ENCODE measurements at regions of chr5 and their contacts with region 1.

Region 1: GRCh38 chr5:154072414-154073171 is 33.8 kb downstream of the MFAP3 start:
- DNase-seq: peak; percentile 72 to 84 (median 76)
- H3K4me3 ChIP-seq: peak overlapping the region in 1 of 7 experiments; percentile 37
- H3K27ac ChIP-seq: no peak overlapping the region
- H3K4me1 ChIP-seq: peaks cover 0 to 7% (median 2%) of the 10 kb centered on the region in 4 experiments
- H3K27me3 ChIP-seq: no peaks in the 10 kb centered on the region

Region 2: DNA sequence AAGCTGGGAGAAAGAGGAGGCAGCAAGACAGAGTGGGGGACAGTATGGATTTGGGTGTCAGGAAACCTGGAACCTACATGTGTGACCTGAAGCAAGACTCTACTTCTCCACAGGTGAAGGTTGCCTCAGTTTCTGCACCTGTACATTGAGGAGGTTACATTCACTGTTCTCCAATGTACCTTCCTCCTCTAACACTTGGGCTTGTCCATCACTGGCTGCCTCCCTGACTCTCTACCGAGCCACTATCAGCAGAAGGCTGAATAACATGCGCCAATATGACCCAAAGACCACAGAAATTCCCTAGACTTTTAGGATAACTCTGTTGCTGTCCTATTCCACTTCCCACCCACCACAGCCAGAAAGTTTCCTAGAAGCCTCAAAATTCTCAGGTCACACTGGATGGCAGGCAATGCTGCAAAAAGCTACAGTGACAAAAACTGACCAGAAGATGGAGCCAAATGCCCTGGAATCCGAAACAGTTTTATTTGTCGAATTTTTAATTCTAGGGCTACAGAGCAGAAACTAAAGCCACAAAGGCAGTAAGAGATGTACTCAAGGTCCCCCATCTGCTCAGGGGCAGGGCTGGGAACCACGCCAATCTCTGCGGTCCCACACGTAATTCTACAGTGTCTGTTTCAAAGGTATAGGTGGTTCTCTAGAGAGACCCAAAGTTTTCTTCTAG is 98.3 kb before region 1 on chr5:
- CTCF ChIA-PET with region 1: interaction called, 12 read pairs
- POLR2A ChIA-PET with region 1: no interaction called
- DNase-seq: peak; percentile 42 to 77 (median 73)
- H3K4me3 ChIP-seq: no peak overlapping the region
- H3K27ac ChIP-seq: no peak overlapping the region
- H3K4me1 ChIP-seq: peaks cover 0 to 4% (median 0%) of the 10 kb centered on the region in 4 experiments
- H3K27me3 ChIP-seq: peaks cover 0 to 3% (median 0%) of the 10 kb centered on the region in 5 experiments

Region 3: DNA sequence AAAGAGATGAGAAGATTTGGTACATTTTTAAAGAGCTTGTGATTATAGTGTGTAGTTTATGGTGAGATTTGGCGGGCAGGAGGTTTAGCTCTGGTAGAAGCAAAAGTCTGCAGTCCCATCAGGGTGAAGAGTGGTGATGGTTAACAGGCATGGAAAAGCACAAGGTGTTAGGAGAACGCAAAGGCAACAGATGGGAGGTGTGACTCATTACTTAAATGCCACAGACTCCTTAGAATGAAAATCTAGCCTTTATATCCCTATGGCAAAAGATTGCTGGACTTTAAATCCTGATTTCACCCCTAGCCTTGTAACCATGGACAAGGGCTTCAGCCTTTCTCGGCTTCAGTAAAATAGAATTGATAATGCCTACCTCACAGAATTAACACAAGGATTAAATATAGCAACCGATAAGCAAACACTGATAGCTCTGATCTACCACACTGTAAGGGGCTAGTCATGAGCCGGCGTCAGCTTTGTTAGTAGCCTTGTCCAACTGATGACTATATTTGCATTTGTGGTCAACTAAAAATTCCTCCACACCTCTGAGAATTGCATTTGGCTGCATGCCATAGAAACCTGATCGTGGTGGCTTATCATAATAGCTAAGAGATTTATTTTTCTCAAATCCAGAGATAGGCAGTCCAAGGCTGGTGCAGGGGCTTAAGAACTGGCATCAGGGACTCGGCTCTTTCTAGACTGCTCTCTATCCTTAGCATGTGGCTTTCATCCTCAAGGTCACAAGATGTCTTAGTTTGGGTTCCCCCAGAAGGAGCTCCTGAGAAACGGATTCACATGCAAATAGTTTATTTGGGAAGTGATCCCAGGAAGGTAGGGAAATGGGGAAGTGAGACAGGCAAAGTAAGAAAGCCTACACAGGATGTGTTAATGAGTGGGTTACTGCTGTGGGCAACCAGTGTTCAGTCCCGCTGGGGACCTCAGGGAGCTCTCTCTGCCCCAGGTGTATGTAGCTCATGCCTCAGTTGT is 14.2 kb before region 1 on chr5:
- CTCF ChIA-PET with region 1: interaction called, 14 read pairs
- POLR2A ChIA-PET with region 1: no interaction called
- DNase-seq: no peak
- H3K4me3 ChIP-seq: no peak overlapping the region
- H3K27ac ChIP-seq: no peak overlapping the region
- H3K4me1 ChIP-seq: no peaks in the 10 kb centered on the region
- H3K27me3 ChIP-seq: no peaks in the 10 kb centered on the region

Region 4: DNA sequence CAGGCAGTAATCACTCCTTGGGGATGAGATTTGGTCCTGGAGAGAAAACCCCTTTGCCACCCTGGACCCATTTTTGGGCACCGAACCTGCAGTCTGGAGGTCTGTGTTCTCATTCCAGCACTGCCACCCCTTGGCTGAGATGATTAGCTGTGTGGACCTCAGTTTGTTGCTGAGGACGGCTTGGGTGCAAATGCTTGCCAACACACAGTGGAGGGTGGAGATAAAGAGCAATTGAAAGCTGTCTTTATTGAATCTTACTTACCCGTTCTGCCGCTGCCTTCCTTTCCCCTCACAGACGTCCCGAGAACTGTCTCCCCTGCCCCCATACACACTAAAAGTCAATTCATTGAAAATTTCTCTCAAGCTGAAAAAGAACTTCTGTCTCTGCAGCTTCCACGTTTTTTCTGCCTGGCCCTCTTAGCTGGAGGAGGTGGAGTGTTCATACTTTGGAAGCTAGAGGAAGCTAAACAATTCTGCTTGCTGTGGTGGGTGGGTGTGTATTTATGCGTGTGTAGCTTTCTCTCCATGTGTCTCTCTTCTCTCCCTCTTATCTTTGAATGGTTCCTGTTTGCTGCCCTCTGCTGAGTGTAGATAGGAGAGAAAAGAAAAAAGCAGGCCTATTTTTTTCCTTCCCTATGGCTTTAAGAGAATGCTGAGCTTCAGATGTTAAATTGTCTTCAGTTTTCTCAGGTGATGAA is 124.5 kb after region 1 on chr5:
- CTCF ChIA-PET with region 1: interaction called, 11 read pairs
- POLR2A ChIA-PET with region 1: no interaction called
- DNase-seq: peak; percentile 81 to 92 (median 87)
- H3K4me3 ChIP-seq: peak overlapping the region in 5 of 7 experiments; percentile 13 to 59 (median 30)
- H3K27ac ChIP-seq: peak overlapping the region in 1 of 2 experiments; percentile 68
- H3K4me1 ChIP-seq: peaks cover 9 to 52% (median 35%) of the 10 kb centered on the region in 4 experiments
- H3K27me3 ChIP-seq: no peaks in the 10 kb centered on the region

Region 5: GRCh38 chr5:154405078-154405792 is 332.6 kb after region 1 on chr5:
- CTCF ChIA-PET with region 1: interaction called, 106 read pairs
- POLR2A ChIA-PET with region 1: no interaction called
- DNase-seq: peak; percentile 65 to 78 (median 75)
- H3K4me3 ChIP-seq: peak overlapping the region; percentile 30 to 71 (median 59)
- H3K27ac ChIP-seq: no peak overlapping the region
- H3K4me1 ChIP-seq: peaks cover 0 to 24% (median 22%) of the 10 kb centered on the region in 4 experiments
- H3K27me3 ChIP-seq: no peaks in the 10 kb centered on the region

Region 6: DNA sequence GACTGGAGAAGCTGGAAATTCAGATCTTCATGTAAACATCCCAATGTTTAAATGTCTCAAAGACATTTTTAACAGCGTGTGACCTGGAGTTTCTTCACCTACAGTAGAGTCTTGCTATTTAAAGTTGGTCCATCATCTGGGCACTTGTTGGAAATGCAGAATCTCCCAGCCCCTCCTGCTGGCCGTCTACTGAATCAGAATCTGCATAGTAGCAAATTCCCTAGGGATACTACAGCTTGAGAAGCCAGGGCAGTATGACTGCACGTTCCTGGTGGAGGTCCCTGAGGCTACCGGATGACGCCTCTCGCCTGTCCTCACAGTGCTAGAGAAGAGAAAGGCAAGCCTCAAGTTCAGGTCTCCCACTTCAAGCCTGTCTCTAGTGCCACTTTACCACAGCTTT is 388.9 kb after region 1 on chr5:
- CTCF ChIA-PET with region 1: interaction called, 12 read pairs
- POLR2A ChIA-PET with region 1: no interaction called
- DNase-seq: no peak
- H3K4me3 ChIP-seq: no peak overlapping the region
- H3K27ac ChIP-seq: no peak overlapping the region
- H3K4me1 ChIP-seq: peaks cover 0 to 3% (median under 1%) of the 10 kb centered on the region in 4 experiments
- H3K27me3 ChIP-seq: peaks cover 0 to 5% (median under 1%) of the 10 kb centered on the region in 5 experiments

Region 7: GRCh38 chr5:154467655-154468354 is 395.2 kb after region 1 on chr5:
- CTCF ChIA-PET with region 1: interaction called, 12 read pairs
- POLR2A ChIA-PET with region 1: no interaction called
- DNase-seq: peak; percentile 62 to 79 (median 71)
- H3K4me3 ChIP-seq: no peak overlapping the region
- H3K27ac ChIP-seq: no peak overlapping the region
- H3K4me1 ChIP-seq: peaks cover 0 to 4% (median 0%) of the 10 kb centered on the region in 4 experiments
- H3K27me3 ChIP-seq: peaks cover 26 to 51% (median 30%) of the 10 kb centered on the region in 5 experiments